Ascending aorta (tissue), 2 donors: ENCODE measurements at regions of chr17 and their contacts with region 1.

Region 1: DNA sequence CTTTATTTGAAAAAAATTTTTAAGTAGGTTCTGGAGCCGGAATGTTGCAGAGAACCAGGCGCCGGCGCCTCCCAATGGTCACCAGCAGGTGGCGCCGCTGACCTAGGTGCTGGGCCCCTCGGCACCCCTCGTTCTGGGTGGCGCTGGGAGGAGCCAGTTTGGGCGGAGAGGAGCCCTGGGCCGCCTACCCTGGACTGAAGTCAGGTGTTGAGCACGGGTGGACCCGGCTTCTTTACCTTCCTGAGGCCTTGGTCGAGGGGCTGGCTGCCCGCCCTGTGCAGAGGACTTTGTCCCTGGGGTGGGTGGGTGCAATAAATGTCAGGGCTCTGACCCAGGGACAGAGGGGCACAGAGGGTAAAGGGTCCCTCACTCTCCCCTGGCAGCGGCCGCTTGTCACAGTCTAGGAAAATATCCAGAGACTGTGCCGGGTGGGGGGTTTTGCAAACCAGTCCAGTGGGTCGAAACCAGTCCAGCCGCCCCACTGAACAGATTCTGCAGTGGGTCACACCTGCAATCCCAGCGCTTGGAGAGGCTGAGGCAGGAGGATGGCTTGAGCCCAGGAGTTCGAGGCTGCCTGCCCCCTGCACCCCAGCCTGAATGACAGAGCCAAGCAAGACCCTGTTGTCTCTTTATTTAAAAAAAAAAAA is 30.1 kb upstream of the TNFRSF13B start:
- DNase-seq: peak in 1 of 2 donors; percentile 81
- H3K4me3 ChIP-seq: peak overlapping the region in 1 of 2 donors; percentile 41
- H3K27ac ChIP-seq: no peak overlapping the region
- H3K4me1 ChIP-seq: peaks cover 10 to 18% of the 10 kb centered on the region in 2 donors
- H3K27me3 ChIP-seq: no peaks in the 10 kb centered on the region
- CTCF ChIP-seq: peak; percentile 90 to 99 (median 94)

Region 2: DNA sequence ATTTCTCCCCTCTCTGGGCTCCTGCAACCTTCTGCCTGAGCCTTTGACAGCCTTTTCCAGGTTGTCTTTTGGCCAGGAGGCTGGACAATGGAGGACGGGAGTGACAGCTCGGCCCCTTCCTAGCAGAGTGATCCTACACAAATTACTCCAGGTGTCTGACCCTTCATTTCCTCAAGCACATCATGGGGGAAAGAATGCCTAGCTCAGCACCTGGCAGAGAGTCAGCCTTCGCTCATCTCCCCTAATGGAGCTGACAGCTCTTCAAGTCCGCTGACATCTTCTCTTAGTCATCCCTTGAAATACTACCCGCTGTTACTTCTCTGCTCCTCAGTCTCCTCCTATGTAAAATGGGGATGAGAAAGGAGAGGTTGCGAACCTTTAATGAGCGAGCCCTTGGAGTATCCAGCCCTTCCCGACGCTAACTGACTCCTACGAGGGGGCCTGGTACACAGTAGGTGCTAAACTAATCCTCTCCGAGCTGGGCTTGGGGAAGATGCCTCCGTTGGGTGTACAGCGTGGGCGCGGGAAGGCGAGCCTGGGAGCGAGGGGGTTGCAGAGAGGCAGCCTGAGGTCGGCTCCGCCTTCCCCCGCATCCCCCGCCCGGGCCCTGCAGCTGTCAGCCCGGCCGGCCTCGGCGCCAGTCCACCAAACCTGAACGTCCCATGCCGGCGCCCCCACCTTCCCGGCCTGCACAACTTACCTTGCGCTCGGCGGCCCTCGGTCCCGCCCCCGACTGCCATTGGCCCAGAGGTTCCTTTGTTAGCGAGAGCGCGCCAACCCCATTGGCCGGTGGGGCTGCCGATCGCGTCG is 39.8 kb after region 1 on chr17:
- intact Hi-C with region 1: loop called (anchors 5 kb)
- DNase-seq: peak; percentile 95 to 99
- H3K4me3 ChIP-seq: peak overlapping the region; percentile 49 to 75
- H3K27ac ChIP-seq: peak overlapping the region; percentile 57 to 58
- H3K4me1 ChIP-seq: peaks cover 3 to 29% of the 10 kb centered on the region in 2 donors
- H3K27me3 ChIP-seq: no peaks in the 10 kb centered on the region
- CTCF ChIP-seq: no peak

Region 3: DNA sequence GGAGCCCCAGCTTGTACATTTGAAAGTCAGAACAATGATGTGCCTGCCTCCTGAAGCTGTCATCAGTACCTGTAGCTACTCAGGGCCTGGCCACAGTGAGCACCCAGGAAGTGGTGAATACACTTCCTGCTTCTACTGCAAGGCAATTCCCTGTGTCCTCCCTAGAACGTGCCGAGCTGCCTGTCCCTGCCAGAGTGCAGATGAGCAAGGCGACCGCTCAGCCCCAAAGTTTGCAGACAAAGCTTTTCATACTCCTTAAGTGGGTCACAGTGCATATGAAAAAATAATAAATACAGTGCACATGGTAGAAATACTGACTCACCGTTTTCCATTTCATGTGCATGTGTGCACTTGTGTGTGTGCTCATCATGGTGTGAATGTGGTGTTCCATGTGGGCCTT is 117.5 kb after region 1 on chr17:
- intact Hi-C with region 1: loop called (anchors 10 kb)
- DNase-seq: no peak
- H3K4me3 ChIP-seq: no peak overlapping the region
- H3K27ac ChIP-seq: peak overlapping the region; percentile 54 to 63
- H3K4me1 ChIP-seq: peaks cover 21 to 37% of the 10 kb centered on the region in 2 donors
- H3K27me3 ChIP-seq: no peaks in the 10 kb centered on the region
- CTCF ChIP-seq: no peak

Region 4: GRCh38 chr17:17151962-17152361 is 150.0 kb after region 1 on chr17:
- intact Hi-C with region 1: loop called (anchors 2 kb)
- DNase-seq: peak; percentile 81 to 97
- H3K4me3 ChIP-seq: no peak overlapping the region
- H3K27ac ChIP-seq: peak overlapping the region; percentile 79 to 91
- H3K4me1 ChIP-seq: peaks cover 15% of the 10 kb centered on the region in 2 donors
- H3K27me3 ChIP-seq: no peaks in the 10 kb centered on the region
- CTCF ChIP-seq: no peak

Region 5: GRCh38 chr17:17303010-17303846 is 301.2 kb after region 1 on chr17 and contains the start of gene NT5M:
- intact Hi-C with region 1: loop called (anchors 10 kb)
- DNase-seq: peak in 1 of 2 donors; percentile 84
- H3K4me3 ChIP-seq: peak within 1 kb of the TSS; percentile 70 to 73
- H3K27ac ChIP-seq: peak within 1 kb of the TSS; percentile 15 to 54
- H3K4me1 ChIP-seq: peaks cover 0 to 6% of the 10 kb centered on the region in 2 donors
- H3K27me3 ChIP-seq: no peaks in the 10 kb centered on the region
- CTCF ChIP-seq: no peak
- total RNA-seq, gene NT5M: 4.6 TPM